Lower leg skin (tissue), 4 donors: ENCODE measurements at regions of chr10 and their contacts with region 1.

Region 1: DNA sequence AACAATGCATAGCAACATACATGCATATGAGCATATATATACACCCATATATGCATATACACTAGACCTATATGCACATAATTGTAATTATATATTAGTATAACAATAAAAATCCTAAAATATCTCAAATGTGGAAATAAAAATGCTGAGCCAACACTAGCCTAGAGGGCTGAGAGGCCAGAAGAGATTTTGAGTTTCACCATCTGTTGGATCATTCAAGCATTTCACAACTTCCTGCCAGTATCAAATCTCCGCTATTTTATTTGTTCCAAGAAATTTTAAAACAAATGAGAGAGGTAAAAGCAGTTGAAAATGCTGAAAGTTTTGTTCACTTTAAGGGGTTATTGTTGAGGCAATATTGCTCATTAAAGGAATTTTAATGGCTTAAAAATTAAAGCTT is 187.0 kb downstream of the PCDH15 start:
- DNase-seq: no peak
- H3K4me3 ChIP-seq: no peak overlapping the region
- CTCF ChIP-seq: no peak
- POLR2A ChIP-seq: no peak

Region 2: DNA sequence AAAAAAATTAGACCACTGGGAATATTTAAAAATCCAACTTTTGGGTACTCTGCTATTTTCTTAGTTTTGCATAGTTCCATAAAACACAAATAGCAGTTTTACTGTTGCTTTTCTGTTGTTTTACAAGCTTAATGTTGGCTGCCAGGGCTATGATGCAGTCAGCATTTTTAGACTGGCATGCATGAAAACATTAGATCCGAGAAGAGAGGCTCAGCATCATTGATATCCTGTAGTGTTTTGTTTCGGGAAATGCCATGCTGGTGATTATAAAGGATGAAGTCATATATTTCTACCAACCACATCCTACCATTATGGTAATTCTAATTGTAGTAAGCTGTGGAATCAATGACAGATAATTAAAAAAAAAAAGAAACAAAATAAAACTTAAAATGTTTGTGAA is 1946.0 kb before region 1 on chr10:
- intact Hi-C with region 1: loop called (anchors 5 kb)
- DNase-seq: no peak
- H3K4me3 ChIP-seq: no peak overlapping the region
- CTCF ChIP-seq: no peak
- POLR2A ChIP-seq: no peak